ENCODE measurements at regions of chr22 and their contacts with region 1.

Region 1: GRCh38 chr22:28917747-28918549 is 34.6 kb downstream of the ZNRF3 start:
- DNase-seq: no peak
- H3K4me3 ChIP-seq: peak overlapping the region in 1 of 4 experiments; percentile 5; a peak in 2 of 8 replicates
- H3K27ac ChIP-seq: no peak overlapping the region
- H3K4me1 ChIP-seq: peaks cover 13 to 20% (median 17%) of the 10 kb centered on the region in 4 experiments
- H3K27me3 ChIP-seq: no peaks in the 10 kb centered on the region
- CTCF ChIP-seq: peak in 1 of 3 experiments; percentile 3; a peak in 1 of 4 replicates
- EP300 ChIP-seq: no peak
- POLR2A ChIP-seq: no peak
- RAD21 ChIP-seq: peak in 1 of 2 experiments; percentile 18; a peak in 1 of 4 replicates

Region 2: GRCh38 chr22:28892175-28892731 is 25.7 kb before region 1 on chr22:
- CTCF ChIA-PET with region 1: interaction called, 11 read pairs
- POLR2A ChIA-PET with region 1: interaction called, 9 read pairs
- DNase-seq: no peak
- H3K4me3 ChIP-seq: no peak overlapping the region
- H3K27ac ChIP-seq: 0 out of 2 replicates have a peak overlapping the region, but pooled peaks have one; percentile 2
- H3K4me1 ChIP-seq: peaks cover 11 to 19% (median 18%) of the 10 kb centered on the region in 4 experiments
- H3K27me3 ChIP-seq: no peaks in the 10 kb centered on the region
- CTCF ChIP-seq: no peak
- EP300 ChIP-seq: no peak
- POLR2A ChIP-seq: no peak
- RAD21 ChIP-seq: no peak

Region 3: GRCh38 chr22:28904211-28904896 is 13.6 kb before region 1 on chr22:
- CTCF ChIA-PET with region 1: interaction called, 20 read pairs
- POLR2A ChIA-PET with region 1: interaction called, 5 read pairs
- DNase-seq: no peak
- H3K4me3 ChIP-seq: no peak overlapping the region
- H3K27ac ChIP-seq: no peak overlapping the region
- H3K4me1 ChIP-seq: peaks cover 9 to 18% (median 14%) of the 10 kb centered on the region in 4 experiments
- H3K27me3 ChIP-seq: no peaks in the 10 kb centered on the region
- CTCF ChIP-seq: no peak
- EP300 ChIP-seq: no peak
- POLR2A ChIP-seq: no peak
- RAD21 ChIP-seq: no peak

Region 4: GRCh38 chr22:28930357-28931007 is 12.5 kb after region 1 on chr22:
- CTCF ChIA-PET with region 1: interaction called, 22 read pairs
- POLR2A ChIA-PET with region 1: interaction called, 4 read pairs
- DNase-seq: no peak
- H3K4me3 ChIP-seq: no peak overlapping the region
- H3K27ac ChIP-seq: no peak overlapping the region
- H3K4me1 ChIP-seq: peaks cover 2 to 16% (median 11%) of the 10 kb centered on the region in 4 experiments; a peak in 6 of 7 replicates
- H3K27me3 ChIP-seq: no peaks in the 10 kb centered on the region
- CTCF ChIP-seq: no peak
- EP300 ChIP-seq: no peak
- POLR2A ChIP-seq: no peak
- RAD21 ChIP-seq: no peak